Lower leg skin (tissue), 4 donors: ENCODE measurements at regions of chr4 and their contacts with region 1.

Region 1: DNA sequence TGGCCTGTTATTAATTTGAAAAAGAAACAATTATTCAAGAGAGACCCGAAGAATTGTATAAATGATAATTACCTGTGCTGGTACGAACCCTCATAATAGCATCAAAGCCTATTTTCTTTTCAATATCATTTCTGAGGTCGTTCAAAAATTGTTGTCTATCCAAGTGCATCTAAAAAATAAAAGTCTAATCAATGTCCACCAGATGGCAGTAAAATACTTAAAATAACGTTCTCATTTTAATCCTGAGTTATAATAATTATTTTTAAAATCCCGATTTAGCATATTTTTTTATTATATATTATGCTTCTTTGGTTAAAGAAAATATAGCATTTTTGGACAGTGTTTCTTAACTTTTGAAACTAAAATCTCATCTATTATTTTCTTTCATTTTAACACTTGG is 55.7 kb downstream of the METTL14 start:
- DNase-seq: no peak
- H3K4me3 ChIP-seq: no peak overlapping the region
- CTCF ChIP-seq: peak in 1 of 3 donors; percentile 12
- POLR2A ChIP-seq: no peak

Region 2: GRCh38 chr4:118798658-118799057 is 57.8 kb after region 1 on chr4:
- intact Hi-C with region 1: no loop called
- DNase-seq: no peak
- H3K4me3 ChIP-seq: no peak overlapping the region
- CTCF ChIP-seq: no peak
- POLR2A ChIP-seq: no peak

Region 3: GRCh38 chr4:118898684-118899138 is 157.8 kb after region 1 on chr4:
- intact Hi-C with region 1: loop called (anchors 10 kb)
- DNase-seq: no peak
- H3K4me3 ChIP-seq: no peak overlapping the region
- CTCF ChIP-seq: no peak
- POLR2A ChIP-seq: no peak

Region 4: DNA sequence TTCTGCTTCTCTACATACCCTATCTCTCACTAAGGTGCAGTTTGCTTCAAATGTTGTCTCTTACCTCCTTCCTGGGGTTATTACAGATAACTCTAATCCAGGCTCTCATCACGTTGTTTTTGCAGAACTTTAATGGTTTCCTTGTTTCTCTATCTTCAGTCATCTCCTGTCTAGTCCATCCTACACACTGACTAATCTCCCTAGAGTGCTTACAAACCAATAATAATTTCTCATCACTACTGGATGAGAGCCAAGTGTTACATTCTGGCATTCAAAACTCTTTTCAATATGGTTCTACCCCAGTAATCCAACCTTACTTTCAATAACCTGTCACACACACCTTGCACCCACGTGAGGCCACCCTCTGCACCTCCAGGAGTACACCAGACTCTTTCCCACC is 233.9 kb after region 1 on chr4:
- intact Hi-C with region 1: loop called (anchors 10 kb)
- DNase-seq: no peak
- H3K4me3 ChIP-seq: no peak overlapping the region
- CTCF ChIP-seq: no peak
- POLR2A ChIP-seq: no peak

Region 5: GRCh38 chr4:120025516-120025915 is 1284.6 kb after region 1 on chr4:
- intact Hi-C with region 1: loop called (anchors 10 kb)
- DNase-seq: no peak
- H3K4me3 ChIP-seq: no peak overlapping the region
- CTCF ChIP-seq: no peak
- POLR2A ChIP-seq: no peak